ENCODE measurements at regions of chr19 and their contacts with region 1.

Region 1: GRCh38 chr19:28633319-28634018 is 579.5 kb downstream of the UQCRFS1 start:
- H3K4me3 ChIP-seq: no peak overlapping the region
- H3K27ac ChIP-seq: no peak overlapping the region
- H3K4me1 ChIP-seq: peaks cover 17% of the 10 kb centered on the region
- CTCF ChIP-seq: peak; percentile 98

Region 2: DNA sequence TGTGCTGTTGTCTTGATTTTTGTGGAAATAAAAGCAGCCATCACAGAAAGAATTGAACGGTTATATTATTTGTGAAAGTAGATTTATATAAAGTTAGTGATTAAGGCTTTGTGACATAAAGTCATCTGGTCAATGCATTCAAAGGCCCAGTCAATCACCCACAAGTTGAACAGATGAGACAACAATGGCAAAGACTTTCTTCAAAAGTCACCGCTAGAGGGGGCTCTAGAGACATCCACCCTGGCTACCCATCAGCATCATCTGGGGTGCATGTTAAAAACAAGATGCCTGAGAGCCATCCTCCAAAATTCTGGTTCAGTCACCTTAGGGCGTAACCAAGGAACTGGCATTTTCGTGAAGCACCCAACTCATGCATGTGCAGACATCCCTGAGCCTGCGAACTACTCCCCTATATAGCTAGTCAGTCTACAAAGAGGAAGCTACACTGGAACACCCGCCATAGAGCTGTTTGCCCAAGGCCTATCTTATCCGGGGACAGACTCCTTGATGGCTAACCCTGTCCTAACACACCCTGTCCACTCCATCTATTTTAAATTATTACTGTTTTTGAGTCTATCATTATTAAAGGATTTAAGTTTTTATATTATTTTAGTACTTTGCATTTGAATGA is 391.1 kb before region 1 on chr19:
- CTCF ChIA-PET with region 1: interaction called, 11 read pairs
- POLR2A ChIA-PET with region 1: no interaction called
- H3K4me3 ChIP-seq: no peak overlapping the region
- H3K27ac ChIP-seq: no peak overlapping the region
- H3K4me1 ChIP-seq: no peaks in the 10 kb centered on the region
- CTCF ChIP-seq: peak; percentile 71

Region 3: GRCh38 chr19:28358633-28359032 is 274.8 kb before region 1 on chr19:
- CTCF ChIA-PET with region 1: interaction called, 14 read pairs
- POLR2A ChIA-PET with region 1: no interaction called
- H3K4me3 ChIP-seq: no peak overlapping the region
- H3K27ac ChIP-seq: no peak overlapping the region
- H3K4me1 ChIP-seq: peaks cover 25% of the 10 kb centered on the region
- CTCF ChIP-seq: no peak

Region 4: GRCh38 chr19:28558783-28559182 is 74.7 kb before region 1 on chr19:
- CTCF ChIA-PET with region 1: interaction called, 13 read pairs
- POLR2A ChIA-PET with region 1: no interaction called
- H3K4me3 ChIP-seq: no peak overlapping the region
- H3K27ac ChIP-seq: no peak overlapping the region
- H3K4me1 ChIP-seq: peaks cover 7% of the 10 kb centered on the region; the same call in 1 of the 2 replicates
- CTCF ChIP-seq: no peak

Region 5: GRCh38 chr19:28606269-28607032 is 27.0 kb before region 1 on chr19:
- CTCF ChIA-PET with region 1: interaction called, 14 read pairs
- POLR2A ChIA-PET with region 1: no interaction called
- H3K4me3 ChIP-seq: no peak overlapping the region
- H3K27ac ChIP-seq: no peak overlapping the region
- H3K4me1 ChIP-seq: no peaks in the 10 kb centered on the region
- CTCF ChIP-seq: no peak

Region 6: GRCh38 chr19:28652765-28653164 is 19.3 kb after region 1 on chr19:
- CTCF ChIA-PET with region 1: interaction called, 96 read pairs
- POLR2A ChIA-PET with region 1: no interaction called
- H3K4me3 ChIP-seq: no peak overlapping the region
- H3K27ac ChIP-seq: no peak overlapping the region
- H3K4me1 ChIP-seq: no peaks in the 10 kb centered on the region
- CTCF ChIP-seq: no peak

Region 7: DNA sequence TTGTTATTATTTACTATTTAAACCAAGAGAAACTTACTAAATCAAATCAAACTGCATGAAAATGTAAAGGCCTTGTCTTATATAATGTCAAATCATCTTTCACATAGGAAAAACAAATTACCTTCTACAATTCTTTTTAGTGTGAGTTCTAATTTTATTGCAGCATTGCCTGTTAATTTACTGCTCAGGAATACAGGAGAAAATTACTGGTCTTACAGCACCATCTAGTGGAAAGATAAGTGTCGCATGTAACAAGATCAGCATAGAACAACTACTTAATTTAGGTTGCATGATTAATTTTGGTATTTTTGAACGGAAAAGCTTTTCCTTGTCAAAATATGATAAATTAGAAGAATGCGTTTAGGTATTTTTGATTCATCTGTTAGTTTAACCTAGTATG is 76.8 kb after region 1 on chr19:
- CTCF ChIA-PET with region 1: interaction called, 35 read pairs
- POLR2A ChIA-PET with region 1: no interaction called
- H3K4me3 ChIP-seq: no peak overlapping the region
- H3K27ac ChIP-seq: no peak overlapping the region
- H3K4me1 ChIP-seq: peaks cover 8% of the 10 kb centered on the region; the same call in 1 of the 2 replicates
- CTCF ChIP-seq: peak; percentile 77